ENCODE measurements at regions of chr9 and their contacts with region 1.

Region 1: GRCh38 chr9:124861342-124862229 is at the starts of genes ARPC5L and RPL35:
- H3K4me3 Mint-ChIP-seq: peak within 1 kb of the TSS; percentile 94
- H3K27ac Mint-ChIP-seq: peak within 1 kb of the TSS; percentile 93
- H3K4me1 Mint-ChIP-seq: peaks cover 37% of the 10 kb centered on the region
- H3K27me3 Mint-ChIP-seq: no peaks in the 10 kb centered on the region

Region 2: DNA sequence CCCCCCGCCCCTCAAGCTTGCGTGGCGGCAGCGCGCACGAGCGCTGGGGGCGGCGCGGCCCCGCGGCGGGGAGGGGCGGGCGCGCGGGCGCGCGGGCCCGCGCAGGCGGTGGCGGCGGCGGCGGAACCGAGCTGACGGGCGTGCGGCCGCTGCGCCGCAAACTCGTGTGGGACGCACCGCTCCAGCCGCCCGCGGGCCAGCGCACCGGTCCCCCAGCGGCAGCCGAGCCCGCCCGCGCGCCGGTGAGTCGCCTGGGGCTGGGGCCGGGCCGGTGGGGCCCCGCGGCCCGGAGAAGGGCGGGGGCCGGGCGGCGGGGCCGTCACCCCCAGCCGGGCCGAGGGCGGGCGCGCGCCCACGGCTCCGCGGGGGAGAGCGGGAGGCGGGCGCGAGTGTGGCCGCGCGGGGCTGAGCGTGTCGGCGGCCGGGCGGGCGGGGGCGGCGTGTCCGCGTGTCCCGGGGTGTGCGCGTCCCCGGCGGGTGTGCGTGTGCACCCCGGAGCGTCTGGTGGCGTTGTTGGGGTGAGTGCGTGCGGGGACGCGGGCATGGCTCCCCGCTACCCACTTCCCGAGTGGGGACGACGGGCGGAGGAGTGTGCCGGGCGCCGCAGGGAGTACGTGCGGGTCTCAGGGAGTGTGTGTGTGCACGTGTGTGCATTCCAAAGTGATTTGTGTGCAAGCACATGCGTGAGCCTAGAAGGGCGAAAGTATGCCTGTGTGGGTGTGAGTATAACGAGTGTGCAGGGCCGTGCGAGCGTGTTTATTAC is 603.6 kb before region 1 on chr9 and contains the start of gene NEK6:
- intact Hi-C with region 1: no loop called
- H3K4me3 Mint-ChIP-seq: peak within 1 kb of the TSS; percentile 94
- H3K27ac Mint-ChIP-seq: peak within 1 kb of the TSS; percentile 90
- H3K4me1 Mint-ChIP-seq: peaks cover 75% of the 10 kb centered on the region
- H3K27me3 Mint-ChIP-seq: no peaks in the 10 kb centered on the region

Region 3: GRCh38 chr9:124849801-124850200 is 11.8 kb before region 1 on chr9:
- intact Hi-C with region 1: no loop called
- H3K4me3 Mint-ChIP-seq: no peak overlapping the region
- H3K27ac Mint-ChIP-seq: no peak overlapping the region
- H3K4me1 Mint-ChIP-seq: peaks cover 6% of the 10 kb centered on the region
- H3K27me3 Mint-ChIP-seq: peaks cover 31% of the 10 kb centered on the region

Region 4: DNA sequence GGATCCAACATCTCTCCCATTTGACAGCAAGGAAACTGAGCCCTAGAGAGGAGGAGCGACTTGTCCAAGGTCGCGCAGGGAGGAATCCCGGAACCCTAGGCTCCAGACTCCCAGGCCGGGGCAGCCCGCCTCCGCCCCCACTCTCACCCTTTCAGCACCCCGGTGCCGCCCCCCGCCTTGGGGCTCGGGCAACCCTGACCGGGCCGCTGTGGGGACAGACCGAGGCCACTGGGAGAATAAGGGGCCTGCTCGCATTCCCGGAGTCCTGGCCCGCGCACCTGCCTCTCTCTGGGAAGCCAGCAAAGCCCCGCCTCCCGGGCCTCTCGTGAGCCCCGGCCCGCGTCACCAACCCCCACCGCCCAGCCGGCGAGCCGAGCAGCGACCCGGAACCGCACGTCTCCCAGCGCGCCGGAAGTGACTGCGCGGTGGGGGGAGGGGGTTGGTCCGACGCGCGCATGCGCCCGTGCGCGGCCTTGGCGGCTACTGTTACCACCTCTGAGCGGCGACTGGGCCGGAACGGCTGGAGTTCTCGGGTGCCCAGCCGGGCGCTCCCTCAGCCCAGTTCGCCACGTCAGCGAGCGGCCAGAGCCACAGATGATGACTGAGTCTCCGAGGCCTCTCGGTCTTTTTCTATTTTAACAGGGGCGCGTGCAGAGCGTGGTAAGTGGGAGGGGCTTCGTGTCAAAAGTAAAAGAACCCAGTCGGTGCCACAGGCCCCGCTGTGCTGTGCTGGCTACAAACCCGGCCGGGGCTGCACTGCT is 79.3 kb after region 1 on chr9 and contains the start of gene GOLGA1:
- intact Hi-C with region 1: loop called (anchors 5 kb)
- H3K4me3 Mint-ChIP-seq: peak within 1 kb of the TSS; percentile 97
- H3K27ac Mint-ChIP-seq: peak within 1 kb of the TSS; percentile 98
- H3K4me1 Mint-ChIP-seq: peaks cover 24% of the 10 kb centered on the region
- H3K27me3 Mint-ChIP-seq: no peaks in the 10 kb centered on the region

Region 5: GRCh38 chr9:124960409-124960752 is 98.8 kb after region 1 on chr9:
- intact Hi-C with region 1: no loop called
- H3K4me3 Mint-ChIP-seq: no peak overlapping the region
- H3K27ac Mint-ChIP-seq: no peak overlapping the region
- H3K4me1 Mint-ChIP-seq: peaks cover 20% of the 10 kb centered on the region
- H3K27me3 Mint-ChIP-seq: no peaks in the 10 kb centered on the region